Transverse colon (tissue), 4 donors: ENCODE measurements at regions of chr6 and their contacts with region 1.

Region 1: GRCh38 chr6:25369433-25370181 is 90.4 kb downstream of the CARMIL1 start:
- DNase-seq: peak; percentile 40
- H3K4me3 ChIP-seq: peak overlapping the region in 2 of 4 donors; percentile 3 to 21
- H3K27ac ChIP-seq: peak overlapping the region; percentile 75 to 87 (median 81)
- H3K4me1 ChIP-seq: peaks cover 10 to 33% (median 16%) of the 10 kb centered on the region in 4 donors
- H3K27me3 ChIP-seq: no peaks in the 10 kb centered on the region
- CTCF ChIP-seq: no peak
- EP300 ChIP-seq: no peak
- POLR2A ChIP-seq: no peak

Region 2: GRCh38 chr6:25392372-25392771 is 22.8 kb after region 1 on chr6:
- in situ Hi-C with region 1: no loop called
- intact Hi-C with region 1: loop called (anchors 1 kb)
- DNase-seq: no peak
- H3K4me3 ChIP-seq: no peak overlapping the region
- H3K27ac ChIP-seq: no peak overlapping the region
- H3K4me1 ChIP-seq: no peaks in the 10 kb centered on the region
- H3K27me3 ChIP-seq: no peaks in the 10 kb centered on the region
- CTCF ChIP-seq: no peak
- EP300 ChIP-seq: no peak
- POLR2A ChIP-seq: no peak

Region 3: DNA sequence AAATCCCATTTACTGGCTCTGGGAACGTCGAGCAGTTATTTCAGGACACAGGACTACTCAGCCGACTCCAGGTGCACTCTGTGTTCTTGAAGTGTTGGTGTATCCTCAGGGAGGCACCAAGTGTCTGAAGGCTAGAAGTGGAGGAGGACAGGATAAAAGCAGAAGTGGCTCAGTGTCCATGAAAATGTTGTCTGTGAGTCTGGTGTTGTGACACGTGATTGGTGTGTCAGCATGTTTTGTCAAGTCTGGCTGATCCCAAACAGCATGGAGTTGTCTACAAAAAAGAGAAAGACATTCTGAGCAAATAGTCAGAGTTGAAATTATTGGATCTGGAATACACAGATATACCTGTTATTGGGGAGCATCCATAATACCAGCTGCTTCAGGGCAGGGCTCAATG is 312.7 kb after region 1 on chr6:
- in situ Hi-C with region 1: no loop called
- intact Hi-C with region 1: no loop called
- DNase-seq: no peak
- H3K4me3 ChIP-seq: no peak overlapping the region
- H3K27ac ChIP-seq: no peak overlapping the region
- H3K4me1 ChIP-seq: no peaks in the 10 kb centered on the region
- H3K27me3 ChIP-seq: no peaks in the 10 kb centered on the region
- CTCF ChIP-seq: no peak
- EP300 ChIP-seq: no peak
- POLR2A ChIP-seq: no peak